Prostate gland (tissue), 2 donors: ENCODE measurements at regions of chr18 and their contacts with region 1.

Region 1: GRCh38 chr18:57881818-57882413 is 78.8 kb upstream of the ATP8B1 start:
- DNase-seq: peak; percentile 63
- H3K4me3 ChIP-seq: no peak overlapping the region
- H3K27ac ChIP-seq: no peak overlapping the region
- H3K4me1 ChIP-seq: no peaks in the 10 kb centered on the region
- H3K27me3 ChIP-seq: no peaks in the 10 kb centered on the region
- CTCF ChIP-seq: peak; percentile 65 to 91 (median 86)
- POLR2A ChIP-seq: no peak

Region 2: GRCh38 chr18:57649556-57650500 is 232.1 kb before region 1 on chr18:
- intact Hi-C with region 1: loop called (anchors 10 kb)
- DNase-seq: no peak
- H3K4me3 ChIP-seq: no peak overlapping the region
- H3K27ac ChIP-seq: no peak overlapping the region
- H3K4me1 ChIP-seq: no peaks in the 10 kb centered on the region
- H3K27me3 ChIP-seq: no peaks in the 10 kb centered on the region
- CTCF ChIP-seq: no peak
- POLR2A ChIP-seq: no peak

Region 3: GRCh38 chr18:57943723-57944122 is 61.8 kb after region 1 on chr18:
- intact Hi-C with region 1: no loop called
- DNase-seq: no peak
- H3K4me3 ChIP-seq: no peak overlapping the region
- H3K27ac ChIP-seq: no peak overlapping the region
- H3K4me1 ChIP-seq: no peaks in the 10 kb centered on the region
- H3K27me3 ChIP-seq: no peaks in the 10 kb centered on the region
- CTCF ChIP-seq: no peak
- POLR2A ChIP-seq: no peak

Region 4: DNA sequence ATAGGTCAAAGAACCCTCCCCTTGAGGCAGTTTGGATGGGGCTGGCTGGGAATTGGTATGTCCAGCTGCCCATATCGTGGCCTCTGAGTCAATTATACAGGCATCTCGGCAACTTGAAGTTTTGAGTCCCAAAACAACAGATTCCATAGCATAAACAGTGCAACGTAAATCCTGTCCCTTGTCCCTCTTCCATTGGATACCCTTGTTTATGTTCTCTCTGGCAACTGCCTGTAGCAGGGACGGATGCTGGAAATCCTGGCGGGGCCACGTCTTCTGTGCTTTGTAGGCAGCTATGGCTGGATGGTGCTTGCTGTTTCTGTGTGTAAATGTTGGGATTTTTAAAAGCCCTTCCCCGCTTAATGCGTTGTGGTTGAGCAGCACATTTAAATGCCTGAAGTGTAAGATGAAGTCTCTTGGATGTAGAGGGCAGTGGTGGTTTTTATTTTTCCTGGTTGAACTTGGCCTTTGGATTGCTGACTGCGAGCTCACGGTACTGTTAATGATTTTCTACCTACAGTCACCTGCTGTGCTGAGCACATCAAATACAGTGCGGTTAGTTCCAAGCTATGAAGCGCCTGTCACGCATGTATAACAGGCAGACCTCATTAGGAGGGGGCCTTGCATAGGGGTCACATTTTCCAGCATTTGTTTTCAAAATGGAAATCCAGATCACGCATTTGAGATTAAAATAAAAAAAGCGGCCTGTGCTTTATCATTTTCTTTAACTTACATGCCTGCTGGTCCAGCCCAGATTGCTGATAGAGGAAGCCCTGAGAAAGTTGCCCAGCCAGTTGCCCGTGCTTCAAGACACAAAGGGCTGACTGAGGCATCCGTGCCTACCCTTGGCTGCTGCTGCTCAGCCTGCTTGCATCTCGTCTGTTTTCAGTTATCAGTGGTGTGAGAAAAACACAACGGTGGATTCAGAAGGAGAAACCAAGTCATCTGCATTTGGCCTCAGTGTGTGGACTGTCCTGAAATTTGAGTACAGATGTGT is 246.8 kb after region 1 on chr18:
- intact Hi-C with region 1: loop called (anchors 5 kb)
- DNase-seq: no peak
- H3K4me3 ChIP-seq: no peak overlapping the region
- H3K27ac ChIP-seq: no peak overlapping the region
- H3K4me1 ChIP-seq: no peaks in the 10 kb centered on the region
- H3K27me3 ChIP-seq: no peaks in the 10 kb centered on the region
- CTCF ChIP-seq: no peak
- POLR2A ChIP-seq: no peak

Region 5: GRCh38 chr18:58176915-58177717 is 295.2 kb after region 1 on chr18:
- intact Hi-C with region 1: loop called (anchors 5 kb)
- DNase-seq: peak; percentile 63
- H3K4me3 ChIP-seq: no peak overlapping the region
- H3K27ac ChIP-seq: peak overlapping the region; percentile 31 to 39
- H3K4me1 ChIP-seq: peaks cover 11% of the 10 kb centered on the region
- H3K27me3 ChIP-seq: no peaks in the 10 kb centered on the region
- CTCF ChIP-seq: peak in 1 of 4 experiments; percentile 4
- POLR2A ChIP-seq: no peak